Right ventricle myocardium inferior (tissue), 1 donor: ENCODE measurements at regions of chr14 and their contacts with region 1.

Region 1: GRCh38 chr14:76761960-76762410 is 717 bp downstream of the VASH1 start:
- DNase-seq: no peak
- ATAC-seq: no peak

Region 2: GRCh38 chr14:76720382-76720813 is 41.6 kb before region 1 on chr14:
- intact Hi-C with region 1: loop called (anchors 2 kb)
- DNase-seq: peak; percentile 91
- ATAC-seq: peak; percentile 83